IMR-90 (cell line): ENCODE measurements at regions of chr16 and their contacts with region 1.

Region 1: GRCh38 chr16:56789360-56789759 is 59.4 kb downstream of the NUP93 start:
- DNase-seq: peak; percentile 60
- ATAC-seq: peak; percentile 65; the same call in 1 of the 2 replicates
- H3K4me3 ChIP-seq: no peak overlapping the region
- H3K27ac ChIP-seq: no peak overlapping the region
- H3K4me1 ChIP-seq: peaks cover 9% of the 10 kb centered on the region
- H3K27me3 ChIP-seq: no peaks in the 10 kb centered on the region
- CTCF ChIP-seq: peak; percentile 60
- POLR2A ChIP-seq: no peak
- RAD21 ChIP-seq: peak; percentile 66

Region 2: GRCh38 chr16:56608043-56608875 is 181.1 kb before region 1 on chr16 and contains the start of gene MT2A:
- CTCF ChIA-PET with region 1: interaction called, 3 read pairs
- POLR2A ChIA-PET with region 1: no interaction called
- dilution Hi-C with region 1: no loop called
- in situ Hi-C with region 1: no loop called
- intact Hi-C with region 1: loop called (anchors 10 kb)
- DNase-seq: peak; percentile 97
- ATAC-seq: peak; percentile 59
- H3K4me3 ChIP-seq: peak within 1 kb of the TSS; percentile 72
- H3K27ac ChIP-seq: peak within 1 kb of the TSS; percentile 99
- H3K4me1 ChIP-seq: peaks cover 30% of the 10 kb centered on the region
- H3K27me3 ChIP-seq: no peaks in the 10 kb centered on the region
- CTCF ChIP-seq: no peak
- POLR2A ChIP-seq: peak; percentile 96
- RAD21 ChIP-seq: no peak
- total RNA-seq, gene MT2A: 25.5 and 55.5 TPM in 2 replicates

Region 3: DNA sequence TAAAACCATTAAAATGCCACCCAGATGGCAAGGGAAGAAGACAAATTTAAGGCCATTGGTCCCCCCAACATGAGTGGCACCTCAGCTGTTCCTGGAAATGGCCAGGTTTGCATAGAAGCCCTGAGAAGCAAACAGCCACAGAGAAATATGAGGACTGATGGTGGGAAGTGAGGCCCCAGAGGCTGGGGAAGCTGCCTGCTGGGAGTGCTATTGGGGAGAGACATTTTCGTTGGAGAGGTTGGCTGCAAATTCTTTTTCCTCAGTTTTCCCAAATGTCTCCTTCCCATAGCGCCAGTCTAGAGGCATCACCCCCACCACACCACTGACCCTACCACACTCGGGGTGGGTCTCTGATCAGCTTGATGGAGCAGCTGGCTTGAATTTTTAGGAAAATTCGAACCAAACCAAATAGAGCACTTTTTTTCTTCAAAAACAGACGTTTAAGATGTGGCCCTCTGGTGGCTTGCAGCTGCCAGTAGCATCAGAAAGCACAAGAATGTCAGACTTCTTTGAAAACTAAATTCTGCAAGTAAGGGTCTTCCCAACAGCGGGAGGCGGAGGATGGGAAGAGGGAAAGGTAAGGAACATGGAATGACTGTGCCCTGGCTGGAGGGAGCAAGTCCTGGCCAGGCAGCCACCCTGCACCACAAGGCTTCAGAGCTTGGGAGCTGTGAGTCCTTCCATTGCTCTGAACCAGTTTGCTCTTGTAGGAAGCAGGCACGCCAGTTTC is 62.5 kb after region 1 on chr16:
- CTCF ChIA-PET with region 1: interaction called, 12 read pairs
- POLR2A ChIA-PET with region 1: no interaction called
- dilution Hi-C with region 1: no loop called
- in situ Hi-C with region 1: no loop called
- intact Hi-C with region 1: loop called (anchors 1 kb)
- DNase-seq: peak; percentile 50
- ATAC-seq: no peak
- H3K4me3 ChIP-seq: no peak overlapping the region
- H3K27ac ChIP-seq: no peak overlapping the region
- H3K4me1 ChIP-seq: peaks cover 33% of the 10 kb centered on the region
- H3K27me3 ChIP-seq: no peaks in the 10 kb centered on the region
- CTCF ChIP-seq: peak; percentile 60
- POLR2A ChIP-seq: no peak
- RAD21 ChIP-seq: peak; percentile 43

Region 4: GRCh38 chr16:56862776-56863175 is 73.4 kb after region 1 on chr16:
- CTCF ChIA-PET with region 1: no interaction called
- POLR2A ChIA-PET with region 1: no interaction called
- dilution Hi-C with region 1: no loop called
- in situ Hi-C with region 1: no loop called
- intact Hi-C with region 1: no loop called
- DNase-seq: no peak
- ATAC-seq: no peak
- H3K4me3 ChIP-seq: no peak overlapping the region
- H3K27ac ChIP-seq: no peak overlapping the region
- H3K4me1 ChIP-seq: no peaks in the 10 kb centered on the region; the same call in 1 of the 2 replicates
- H3K27me3 ChIP-seq: no peaks in the 10 kb centered on the region
- CTCF ChIP-seq: no peak
- POLR2A ChIP-seq: no peak
- RAD21 ChIP-seq: no peak

Region 5: DNA sequence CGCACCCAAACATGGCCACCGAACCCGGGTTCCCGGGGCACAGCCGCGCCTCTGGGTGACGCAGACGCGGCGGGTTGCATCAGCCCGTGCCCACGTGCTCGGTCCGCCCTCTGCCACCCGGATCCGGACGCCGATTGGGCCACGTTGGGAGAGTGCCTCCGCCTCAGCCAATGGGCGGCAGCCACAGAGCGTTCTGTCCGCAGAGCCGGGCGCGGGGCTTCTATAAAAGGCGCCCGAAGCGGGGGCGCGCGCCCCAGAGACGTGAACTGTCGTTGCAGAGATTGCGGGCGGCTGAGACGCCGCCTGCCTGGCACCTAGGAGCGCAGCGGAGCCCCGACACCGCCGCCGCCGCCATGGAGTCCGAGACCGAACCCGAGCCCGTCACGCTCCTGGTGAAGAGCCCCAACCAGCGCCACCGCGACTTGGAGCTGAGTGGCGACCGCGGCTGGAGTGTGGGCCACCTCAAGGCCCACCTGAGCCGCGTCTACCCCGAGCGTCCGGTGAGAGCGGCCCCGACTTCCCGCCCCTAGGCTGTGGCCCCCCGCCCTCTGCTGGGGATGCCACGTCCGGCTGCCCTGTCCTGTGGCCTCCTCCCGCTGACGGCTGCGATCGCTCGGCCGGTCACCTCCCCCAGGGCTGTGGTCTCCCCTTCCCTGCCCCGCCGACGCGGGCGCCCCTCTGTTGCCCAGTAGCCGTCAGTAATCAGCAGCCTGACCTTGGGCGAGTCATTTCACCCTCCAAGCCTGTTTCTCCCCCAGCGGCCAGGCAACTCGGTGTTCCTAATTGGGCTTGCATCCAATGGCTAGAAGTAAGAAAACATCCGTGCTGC is 142.7 kb after region 1 on chr16 and contains the start of gene HERPUD1:
- CTCF ChIA-PET with region 1: interaction called, 3 read pairs
- POLR2A ChIA-PET with region 1: no interaction called
- dilution Hi-C with region 1: no loop called
- in situ Hi-C with region 1: no loop called
- intact Hi-C with region 1: loop called (anchors 1 kb)
- DNase-seq: peak; percentile 97
- ATAC-seq: peak; percentile 94
- H3K4me3 ChIP-seq: peak within 1 kb of the TSS; percentile 63
- H3K27ac ChIP-seq: peak within 1 kb of the TSS; percentile 97
- H3K4me1 ChIP-seq: peaks cover 8% of the 10 kb centered on the region
- H3K27me3 ChIP-seq: no peaks in the 10 kb centered on the region
- CTCF ChIP-seq: no peak
- POLR2A ChIP-seq: peak; percentile 100
- RAD21 ChIP-seq: peak; percentile 1; the same call in 1 of the 2 replicates
- total RNA-seq, gene HERPUD1: 83.3 and 148 TPM in 2 replicates

Region 6: DNA sequence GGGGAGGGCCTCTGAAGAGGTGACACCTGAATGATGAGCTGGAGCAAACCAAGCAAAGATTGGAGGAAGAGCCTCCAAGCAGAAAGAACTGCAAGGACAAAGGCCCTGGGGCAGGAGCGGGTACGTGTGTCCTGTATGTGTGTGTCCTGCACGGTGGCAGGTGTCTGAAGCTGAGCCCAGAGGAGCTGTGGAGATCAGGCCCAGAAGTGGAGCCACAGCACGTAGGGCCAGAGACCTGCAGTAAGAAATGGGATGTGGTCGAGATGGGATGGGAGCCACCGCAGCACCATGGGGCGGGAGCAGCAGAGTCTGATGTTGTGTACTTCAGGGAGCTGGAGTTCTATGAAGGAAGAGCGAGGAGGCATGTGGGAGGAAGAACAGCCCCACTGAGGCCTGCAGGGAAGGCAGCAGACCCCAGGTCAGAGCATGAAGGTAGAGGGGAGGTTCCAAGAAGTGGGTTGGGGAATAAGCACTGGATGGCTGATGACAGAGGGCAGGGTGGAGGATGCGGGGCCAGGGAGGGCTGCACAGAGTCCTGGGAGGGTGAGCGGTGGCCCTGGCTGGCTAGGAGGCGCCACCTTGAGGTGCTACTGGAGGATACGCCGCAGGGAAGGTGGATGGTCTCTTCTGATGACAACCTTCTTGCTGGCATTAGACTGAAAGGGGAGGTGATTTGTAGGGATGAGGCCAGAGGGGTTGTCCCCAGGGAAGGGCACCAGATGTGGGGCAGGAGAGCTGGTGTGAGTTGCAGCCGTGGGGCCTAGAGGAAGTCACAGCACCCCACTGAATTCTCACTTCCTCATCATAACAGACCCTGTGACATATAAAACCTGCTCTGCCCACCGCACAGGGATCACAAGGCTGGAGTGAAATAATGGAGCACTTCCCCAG is 161.8 kb after region 1 on chr16:
- CTCF ChIA-PET with region 1: interaction called, 3 read pairs
- POLR2A ChIA-PET with region 1: no interaction called
- dilution Hi-C with region 1: no loop called
- in situ Hi-C with region 1: no loop called
- intact Hi-C with region 1: loop called (anchors 2 kb)
- DNase-seq: peak; percentile 51
- ATAC-seq: peak; percentile 85
- H3K4me3 ChIP-seq: no peak overlapping the region
- H3K27ac ChIP-seq: no peak overlapping the region
- H3K4me1 ChIP-seq: no peaks in the 10 kb centered on the region
- H3K27me3 ChIP-seq: no peaks in the 10 kb centered on the region
- CTCF ChIP-seq: peak; percentile 70
- POLR2A ChIP-seq: peak; percentile 14; the same call in 1 of the 2 replicates
- RAD21 ChIP-seq: peak; percentile 81

Region 7: DNA sequence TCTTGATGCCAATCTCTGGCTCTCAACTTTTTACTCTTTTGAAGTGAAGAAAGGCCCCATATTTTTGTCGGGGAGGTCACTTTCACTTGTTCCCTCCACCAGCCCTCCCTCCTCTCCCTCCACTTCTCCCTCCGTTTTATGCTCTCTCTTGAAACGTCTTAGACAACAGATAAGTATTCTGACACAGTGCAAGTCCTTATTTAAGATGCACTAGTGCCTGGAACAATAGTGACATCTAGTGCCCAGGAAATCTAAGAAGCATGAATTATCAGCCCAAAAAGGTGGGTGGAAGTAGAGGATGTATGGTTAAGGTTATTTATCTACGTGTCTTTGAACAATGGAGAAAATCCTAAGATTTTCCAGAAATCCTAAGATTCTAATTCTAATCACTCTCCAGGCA is 378.6 kb after region 1 on chr16:
- CTCF ChIA-PET with region 1: no interaction called
- POLR2A ChIA-PET with region 1: no interaction called
- dilution Hi-C with region 1: no loop called
- in situ Hi-C with region 1: no loop called
- intact Hi-C with region 1: loop called (anchors 5 kb)
- DNase-seq: peak; percentile 83
- ATAC-seq: peak; percentile 69
- H3K4me3 ChIP-seq: no peak overlapping the region
- H3K27ac ChIP-seq: no peak overlapping the region
- H3K4me1 ChIP-seq: no peaks in the 10 kb centered on the region
- H3K27me3 ChIP-seq: no peaks in the 10 kb centered on the region
- CTCF ChIP-seq: peak; percentile 78
- POLR2A ChIP-seq: no peak
- RAD21 ChIP-seq: peak; percentile 89